GM10248 (cell line): ENCODE measurements at regions of chr16 and their contacts with region 1.

Region 1: GRCh38 chr16:3059000-3059722 is 6.3 kb upstream of the IL32 start:
- DNase-seq: peak; percentile 95
- CTCF ChIP-seq: peak; percentile 93

Region 2: DNA sequence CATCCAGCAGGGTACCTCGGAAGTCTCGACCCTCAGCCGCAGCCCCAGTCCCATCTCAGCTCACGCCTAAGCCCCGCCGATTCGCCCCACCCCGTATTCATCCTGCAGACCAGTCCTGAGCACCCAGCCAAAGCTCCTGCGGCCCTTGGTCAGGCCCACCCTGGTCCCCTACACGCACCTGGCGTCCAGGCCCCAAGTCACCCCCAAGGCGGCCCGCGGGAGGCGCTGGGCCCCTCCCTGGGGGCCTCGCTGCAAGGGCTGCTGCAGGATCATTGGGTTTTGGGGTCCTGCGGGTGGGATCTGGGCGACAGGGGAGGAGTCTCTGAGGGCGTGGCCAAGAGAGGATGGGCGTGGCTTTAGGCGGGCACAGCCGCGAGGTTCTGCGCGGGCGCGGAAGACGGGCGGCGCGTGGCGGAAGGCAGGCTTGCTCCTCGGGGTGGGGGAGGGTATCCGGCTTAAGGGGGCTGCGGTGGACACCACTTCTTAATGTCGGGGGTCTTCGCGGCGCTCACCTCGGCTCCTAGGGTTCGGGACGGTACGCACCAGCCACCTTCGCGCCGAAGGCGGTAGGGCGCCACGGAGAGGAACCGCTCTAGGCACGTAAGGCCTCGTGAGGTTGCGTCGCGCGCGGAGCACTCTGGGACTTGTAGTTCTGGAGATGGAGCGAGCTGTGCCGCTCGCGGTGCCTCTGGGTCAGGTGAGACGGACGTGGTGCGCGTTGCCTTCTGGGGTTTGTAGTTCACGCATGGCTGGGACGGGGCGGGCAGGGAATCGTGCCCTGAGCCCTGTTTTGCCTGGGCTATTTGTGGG is 35.3 kb before region 1 on chr16 and contains the starts of genes HCFC1R1 and THOC6:
- CTCF ChIA-PET with region 1: interaction called, 75 read pairs
- POLR2A ChIA-PET with region 1: interaction called, 3 read pairs
- DNase-seq: peak; percentile 92
- CTCF ChIP-seq: no peak

Region 3: GRCh38 chr16:3045357-3045728 is 13.8 kb before region 1 on chr16:
- CTCF ChIA-PET with region 1: interaction called, 25 read pairs
- POLR2A ChIA-PET with region 1: interaction called, 3 read pairs
- DNase-seq: no peak
- CTCF ChIP-seq: no peak

Region 4: DNA sequence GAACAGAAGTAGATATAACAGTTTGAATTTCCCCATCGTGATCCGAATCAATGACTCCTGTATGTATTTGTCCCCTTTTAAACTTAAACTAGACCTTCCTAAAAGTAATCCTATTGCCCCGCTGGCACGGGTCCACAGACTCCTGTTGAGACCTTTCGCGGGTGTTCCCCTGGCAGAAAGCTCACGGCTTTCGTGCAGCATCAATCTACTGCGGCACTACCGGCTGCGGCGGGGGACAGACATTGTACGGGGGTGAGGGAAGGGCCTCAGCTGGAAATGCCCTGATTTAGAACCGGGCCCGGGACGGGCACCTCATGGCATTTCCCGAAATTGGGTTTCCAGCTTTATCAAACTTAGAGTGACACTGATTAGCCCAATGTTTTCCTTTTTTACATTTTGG is 20.9 kb after region 1 on chr16:
- CTCF ChIA-PET with region 1: interaction called, 38 read pairs
- POLR2A ChIA-PET with region 1: no interaction called
- DNase-seq: no peak
- CTCF ChIP-seq: no peak

Region 5: DNA sequence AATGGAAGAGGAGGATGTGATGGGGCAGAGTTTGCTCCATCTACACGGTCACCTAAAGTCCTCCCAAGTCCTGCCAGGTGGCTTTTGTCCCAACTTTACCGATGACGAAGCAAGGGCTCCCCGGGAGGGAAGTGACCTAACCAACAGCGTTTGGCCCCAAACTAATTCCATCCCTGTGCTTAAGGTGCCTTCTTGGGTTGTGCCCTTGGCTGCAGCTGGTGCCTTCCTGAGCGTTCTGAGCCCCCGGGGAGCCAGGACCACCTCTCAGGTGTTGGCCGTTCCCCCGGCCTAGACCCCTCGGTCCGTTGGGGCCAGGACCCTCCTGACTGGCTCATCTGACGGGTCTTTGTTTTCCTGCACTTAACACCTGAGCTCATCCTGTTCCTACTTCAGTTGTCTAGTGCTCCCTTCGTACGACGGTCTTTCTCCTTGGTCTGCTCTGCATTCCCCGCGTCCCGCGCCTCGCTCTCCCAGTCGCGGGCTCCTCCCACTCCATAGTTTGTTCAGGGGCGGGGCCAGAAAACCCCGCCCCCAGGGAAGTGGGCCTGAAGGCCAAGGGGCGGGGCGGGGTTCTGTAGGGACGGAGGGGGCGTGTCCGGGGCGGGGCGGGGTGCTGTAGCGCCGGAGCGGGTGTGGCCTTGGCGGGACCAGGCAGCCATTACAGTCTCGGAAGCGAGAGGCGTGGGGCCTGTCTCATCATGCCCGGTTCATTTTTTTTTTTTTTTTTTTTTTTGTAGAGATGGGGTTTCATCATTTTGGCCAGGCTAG is 40.8 kb after region 1 on chr16:
- CTCF ChIA-PET with region 1: interaction called, 33 read pairs
- POLR2A ChIA-PET with region 1: no interaction called
- DNase-seq: peak; percentile 98
- CTCF ChIP-seq: no peak

Region 6: DNA sequence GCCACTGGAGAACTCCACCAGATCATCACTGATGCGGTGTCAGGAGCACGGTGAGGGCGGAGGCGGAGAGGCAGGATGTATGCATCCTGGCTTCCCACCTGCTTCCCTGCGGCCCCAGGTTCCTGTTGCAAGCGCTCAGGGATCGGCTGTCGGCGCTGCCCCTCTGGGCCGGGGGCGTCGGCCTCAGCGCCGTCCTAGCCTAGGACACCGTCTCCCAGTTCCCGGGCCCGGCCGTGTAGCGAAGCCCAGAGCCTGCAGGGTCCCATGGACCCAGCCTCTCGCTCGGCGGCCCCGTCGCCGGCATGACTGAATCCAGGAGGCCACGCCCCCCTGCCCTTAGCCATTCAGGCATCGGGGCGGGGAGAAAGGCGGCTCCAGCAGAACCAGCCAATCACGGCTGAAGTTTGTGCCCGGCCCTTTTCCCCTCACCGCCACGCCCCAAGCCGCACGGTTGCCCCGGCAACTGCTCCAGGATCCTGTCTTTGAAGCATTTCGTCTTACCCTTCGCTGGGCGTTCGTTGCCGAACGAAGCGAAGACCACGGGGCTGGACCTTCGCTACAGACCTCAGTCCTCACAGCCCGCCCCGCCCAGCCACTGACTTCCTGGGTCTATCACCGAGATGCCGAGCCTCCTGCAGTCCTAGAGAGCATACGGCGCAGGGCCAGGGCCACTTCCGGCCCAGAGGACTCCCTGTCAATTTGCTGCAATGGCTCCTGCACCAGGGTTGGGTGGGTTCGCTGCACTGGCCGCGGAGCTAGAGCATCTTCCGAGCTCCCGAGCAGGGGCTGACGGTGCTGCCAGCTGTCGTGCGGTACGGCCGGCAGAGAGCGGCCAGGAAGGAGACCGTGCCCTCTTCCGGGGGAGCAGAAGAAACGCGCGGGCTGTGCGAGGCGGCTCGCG is 65.1 kb after region 1 on chr16:
- CTCF ChIA-PET with region 1: interaction called, 119 read pairs
- POLR2A ChIA-PET with region 1: no interaction called
- DNase-seq: peak; percentile 97
- CTCF ChIP-seq: peak; percentile 20